WTC11 (cell line): ENCODE measurements at regions of chr6 and their contacts with region 1.

Region 1: DNA sequence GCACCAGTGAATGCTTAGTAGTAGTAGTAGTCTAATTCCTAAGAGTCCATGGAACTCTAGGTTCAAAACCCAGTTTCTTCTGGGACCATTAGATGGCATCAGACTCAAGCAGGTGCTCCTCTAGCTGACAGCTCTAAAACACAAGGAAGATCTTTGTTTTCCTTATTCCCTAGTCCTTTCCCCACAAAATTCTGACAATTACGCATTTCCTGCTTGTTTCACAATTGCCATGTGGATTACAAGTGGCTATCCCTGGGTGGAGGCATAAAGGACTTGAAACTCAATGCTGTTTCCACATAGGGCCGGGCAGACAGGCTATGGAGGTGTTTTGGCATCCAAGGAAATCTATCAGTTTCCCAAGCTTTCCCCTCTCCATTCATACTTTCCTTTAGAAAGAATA is 9.2 kb upstream of the HLA-DOB start:
- DNase-seq: no peak
- ATAC-seq: peak; percentile 86
- H3K4me3 Mint-ChIP-seq: no peak overlapping the region
- H3K27ac Mint-ChIP-seq: peak overlapping the region; percentile 68; the same call in 1 of the 2 replicates
- H3K4me1 Mint-ChIP-seq: peaks cover 9% of the 10 kb centered on the region
- H3K27me3 Mint-ChIP-seq: no peaks in the 10 kb centered on the region
- CTCF ChIP-seq: no peak

Region 2: DNA sequence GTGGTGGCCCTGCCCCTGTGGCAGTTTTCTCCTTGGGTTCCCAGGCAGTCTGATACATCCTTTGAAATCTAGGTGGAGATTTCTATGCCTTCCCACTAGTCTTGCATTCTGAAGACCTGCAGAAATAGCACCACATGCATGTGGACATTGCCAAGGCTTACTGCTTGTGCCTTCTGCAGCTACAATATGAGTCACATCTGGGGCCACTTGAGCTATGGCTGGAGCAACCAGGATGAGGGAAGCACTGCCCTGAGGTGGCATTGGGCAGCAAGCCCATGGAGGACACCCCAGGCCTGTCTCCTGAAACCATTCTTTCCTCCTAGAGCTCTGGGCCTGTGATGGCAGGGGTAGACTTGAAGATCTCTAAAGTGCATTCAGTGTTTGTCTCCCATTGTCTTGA is 46.9 kb before region 1 on chr6:
- CTCF ChIA-PET with region 1: no interaction called
- POLR2A ChIA-PET with region 1: no interaction called
- DNase-seq: no peak
- ATAC-seq: no peak
- H3K4me3 Mint-ChIP-seq: no peak overlapping the region
- H3K27ac Mint-ChIP-seq: no peak overlapping the region
- H3K4me1 Mint-ChIP-seq: no peaks in the 10 kb centered on the region
- H3K27me3 Mint-ChIP-seq: peaks cover 7% of the 10 kb centered on the region
- CTCF ChIP-seq: no peak

Region 3: DNA sequence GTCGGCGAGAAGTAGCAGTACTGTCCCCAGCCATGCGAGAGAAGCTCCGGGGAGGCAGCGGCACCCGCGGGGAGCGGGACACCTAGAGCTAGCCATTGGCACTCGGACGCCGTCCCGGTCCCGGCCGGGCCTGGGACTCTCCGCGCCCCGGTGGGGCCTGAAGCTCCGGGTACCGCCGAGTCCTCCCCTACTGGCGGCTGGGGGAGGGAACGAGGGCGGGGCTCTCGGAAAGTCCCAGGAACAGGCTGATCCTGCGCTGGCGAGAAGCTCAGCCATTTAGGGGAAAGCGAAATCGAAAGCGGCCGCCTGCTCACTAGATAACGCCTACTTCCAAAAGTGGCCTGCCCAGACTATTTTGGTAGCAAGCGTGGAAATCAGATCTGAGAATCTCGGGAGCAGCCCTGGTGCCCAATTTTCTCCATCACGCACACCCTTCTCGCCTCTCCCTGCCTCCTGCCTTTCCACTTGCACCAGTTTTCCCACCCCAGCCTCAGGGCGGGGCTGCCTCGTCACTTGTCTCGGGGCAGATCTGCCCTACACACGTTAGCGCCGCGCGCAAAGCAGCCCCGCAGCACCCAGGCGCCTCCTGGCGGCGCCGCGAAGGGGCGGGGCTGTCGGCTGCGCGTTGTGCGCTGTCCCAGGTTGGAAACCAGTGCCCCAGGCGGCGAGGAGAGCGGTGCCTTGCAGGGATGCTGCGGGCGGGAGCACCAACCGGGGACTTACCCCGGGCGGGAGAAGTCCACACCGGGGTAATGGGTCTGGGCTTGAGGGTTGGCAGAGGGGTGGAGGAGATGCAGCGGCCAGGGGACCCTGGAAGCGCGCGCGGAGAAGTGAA is 27.8 kb after region 1 on chr6 and contains the starts of genes PSMB9 and TAP1:
- CTCF ChIA-PET with region 1: interaction called, 20 read pairs
- POLR2A ChIA-PET with region 1: no interaction called
- DNase-seq: peak; percentile 94
- ATAC-seq: peak; percentile 91
- H3K4me3 Mint-ChIP-seq: peak within 1 kb of the TSS; percentile 88
- H3K27ac Mint-ChIP-seq: peak within 1 kb of the TSS; percentile 90
- H3K4me1 Mint-ChIP-seq: peaks cover 14% of the 10 kb centered on the region
- H3K27me3 Mint-ChIP-seq: peaks cover 91% of the 10 kb centered on the region
- CTCF ChIP-seq: 0 out of 2 replicates have a peak, but pooled peaks have one; percentile 31
- total RNA-seq, gene PSMB9: 1.8 to 4.3 TPM (median 4.0 TPM) in 3 replicates
- total RNA-seq, gene TAP1: 13.6 to 15.9 TPM (median 15.7 TPM) in 3 replicates

Region 4: DNA sequence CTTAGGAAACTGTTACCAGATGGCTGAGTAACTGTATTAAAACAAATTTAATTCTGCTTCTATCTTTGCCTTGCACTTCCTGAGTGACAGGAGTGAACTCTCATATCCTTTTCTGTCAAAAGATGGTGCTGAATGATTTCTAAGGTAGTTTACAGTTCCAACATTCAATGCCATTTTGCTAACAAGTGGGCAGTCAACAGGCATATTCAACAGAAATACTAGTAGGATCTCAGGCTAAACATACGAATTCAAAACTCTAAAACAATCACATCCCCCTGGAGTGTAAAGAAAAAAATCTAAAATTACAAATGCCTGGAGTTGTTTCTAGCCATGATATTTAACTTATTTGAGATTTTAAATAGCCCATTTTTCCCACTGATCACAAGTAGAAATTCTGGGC is 34.7 kb after region 1 on chr6:
- CTCF ChIA-PET with region 1: interaction called, 13 read pairs
- POLR2A ChIA-PET with region 1: no interaction called
- DNase-seq: no peak
- ATAC-seq: no peak
- H3K4me3 Mint-ChIP-seq: no peak overlapping the region
- H3K27ac Mint-ChIP-seq: peak overlapping the region; percentile 88
- H3K4me1 Mint-ChIP-seq: peaks cover 10% of the 10 kb centered on the region
- H3K27me3 Mint-ChIP-seq: peaks cover 37% of the 10 kb centered on the region
- CTCF ChIP-seq: no peak